ENCODE measurements at regions of chr19 and their contacts with region 1.

Region 1: GRCh38 chr19:20513179-20513934 is 52.2 kb downstream of the ZNF737 start:
- DNase-seq: no peak
- ATAC-seq: no peak
- H3K4me3 ChIP-seq: no peak overlapping the region
- H3K27ac ChIP-seq: no peak overlapping the region
- H3K4me1 ChIP-seq: no peaks in the 10 kb centered on the region
- H3K27me3 ChIP-seq: no peaks in the 10 kb centered on the region
- CTCF ChIP-seq: peak; percentile 17; the same call in 1 of the 2 replicates

Region 2: GRCh38 chr19:20247016-20247683 is 266.2 kb before region 1 on chr19:
- CTCF ChIA-PET with region 1: interaction called, 4 read pairs
- POLR2A ChIA-PET with region 1: no interaction called
- in situ Hi-C with region 1: no loop called
- intact Hi-C with region 1: loop called (anchors 5 kb)
- DNase-seq: peak; percentile 5
- ATAC-seq: peak; percentile 86
- H3K4me3 ChIP-seq: no peak overlapping the region
- H3K27ac ChIP-seq: no peak overlapping the region
- H3K4me1 ChIP-seq: no peaks in the 10 kb centered on the region
- H3K27me3 ChIP-seq: no peaks in the 10 kb centered on the region
- CTCF ChIP-seq: peak; percentile 81

Region 3: GRCh38 chr19:20444202-20444885 is 69.0 kb before region 1 on chr19:
- CTCF ChIA-PET with region 1: no interaction called
- POLR2A ChIA-PET with region 1: no interaction called
- in situ Hi-C with region 1: no loop called
- intact Hi-C with region 1: no loop called
- DNase-seq: no peak
- ATAC-seq: no peak
- H3K4me3 ChIP-seq: no peak overlapping the region
- H3K27ac ChIP-seq: no peak overlapping the region
- H3K4me1 ChIP-seq: no peaks in the 10 kb centered on the region
- H3K27me3 ChIP-seq: no peaks in the 10 kb centered on the region
- CTCF ChIP-seq: no peak

Region 4: DNA sequence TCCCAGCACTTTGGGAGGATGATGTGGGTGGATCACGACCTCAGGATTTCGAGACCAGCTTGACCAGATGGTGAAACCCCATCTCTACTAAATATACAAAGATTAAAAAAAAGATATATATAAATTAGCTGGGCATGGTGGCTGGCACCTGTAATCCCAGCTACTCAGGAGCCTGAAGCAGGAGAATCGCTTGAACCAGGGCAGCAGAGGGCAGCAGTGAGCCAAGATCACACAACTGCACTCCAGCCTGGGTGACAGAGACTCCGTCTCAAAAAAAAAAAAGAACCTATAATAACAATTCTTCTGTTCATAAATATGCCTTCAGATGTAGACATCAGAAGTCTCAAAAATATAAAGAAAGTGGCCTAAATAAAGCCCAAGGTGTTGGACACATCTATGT is 44.7 kb after region 1 on chr19:
- CTCF ChIA-PET with region 1: no interaction called
- POLR2A ChIA-PET with region 1: no interaction called
- in situ Hi-C with region 1: no loop called
- intact Hi-C with region 1: no loop called
- DNase-seq: no peak
- ATAC-seq: no peak
- H3K4me3 ChIP-seq: no peak overlapping the region
- H3K27ac ChIP-seq: no peak overlapping the region
- H3K4me1 ChIP-seq: no peaks in the 10 kb centered on the region
- H3K27me3 ChIP-seq: no peaks in the 10 kb centered on the region
- CTCF ChIP-seq: no peak

Region 5: GRCh38 chr19:20612711-20613316 is 99.5 kb after region 1 on chr19:
- CTCF ChIA-PET with region 1: no interaction called
- POLR2A ChIA-PET with region 1: no interaction called
- in situ Hi-C with region 1: no loop called
- intact Hi-C with region 1: no loop called
- DNase-seq: no peak
- ATAC-seq: no peak
- H3K4me3 ChIP-seq: peak overlapping the region; percentile 29 to 52
- H3K27ac ChIP-seq: peak overlapping the region; percentile 54
- H3K4me1 ChIP-seq: no peaks in the 10 kb centered on the region
- H3K27me3 ChIP-seq: no peaks in the 10 kb centered on the region
- CTCF ChIP-seq: no peak

Measured in Panc1 (cell line).